Caco-2 (cell line): ENCODE measurements at regions of chr6 and their contacts with region 1.

Region 1: GRCh38 chr6:18122124-18123093 is at the start of gene NHLRC1:
- DNase-seq: peak; percentile 81 to 90
- H3K4me3 ChIP-seq: peak within 1 kb of the TSS; percentile 70
- H3K4me3 Mint-ChIP-seq: peak within 1 kb of the TSS; percentile 76
- H3K27ac Mint-ChIP-seq: peak within 1 kb of the TSS; percentile 52
- H3K4me1 ChIP-seq: peaks cover 7% of the 10 kb centered on the region; the same call in 1 of the 2 replicates
- H3K4me1 Mint-ChIP-seq: peaks cover 7% of the 10 kb centered on the region
- H3K27me3 ChIP-seq: no peaks in the 10 kb centered on the region; the same call in 1 of the 2 replicates
- H3K27me3 Mint-ChIP-seq: peaks cover 3% of the 10 kb centered on the region
- CTCF ChIP-seq: peak; percentile 80 to 92
- total RNA-seq, gene NHLRC1: 1.6 and 2.1 TPM in 2 replicates

Region 2: GRCh38 chr6:17584241-17584803 is 538.1 kb before region 1 on chr6:
- CTCF ChIA-PET with region 1: interaction called, 3 read pairs
- POLR2A ChIA-PET with region 1: no interaction called
- intact Hi-C with region 1: loop called (anchors 10 kb)
- DNase-seq: peak in 1 of 2 experiments; percentile 54
- H3K4me3 ChIP-seq: no peak overlapping the region
- H3K4me3 Mint-ChIP-seq: no peak overlapping the region
- H3K27ac Mint-ChIP-seq: no peak overlapping the region
- H3K4me1 ChIP-seq: no peaks in the 10 kb centered on the region
- H3K4me1 Mint-ChIP-seq: peaks cover 12% of the 10 kb centered on the region
- H3K27me3 ChIP-seq: no peaks in the 10 kb centered on the region
- H3K27me3 Mint-ChIP-seq: no peaks in the 10 kb centered on the region
- CTCF ChIP-seq: peak; percentile 62 to 87

Region 3: DNA sequence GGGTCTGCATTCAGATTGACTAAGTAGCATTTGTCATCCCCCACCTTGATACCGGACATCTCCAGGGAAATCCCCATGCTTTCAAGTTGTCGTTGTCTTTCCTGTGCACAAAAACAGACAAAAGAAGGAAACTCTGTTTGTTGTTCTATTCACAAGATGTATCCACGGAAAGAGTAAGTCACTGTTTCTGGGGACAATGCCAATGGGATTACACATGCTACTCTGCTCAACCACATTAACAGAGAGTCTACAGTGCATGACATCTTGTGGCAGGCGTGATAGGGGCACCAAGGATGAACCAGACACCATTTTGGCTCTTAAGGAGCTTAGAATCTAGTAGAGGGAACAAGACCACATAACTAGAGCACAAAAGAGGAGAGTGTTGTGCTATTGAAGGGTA is 291.3 kb before region 1 on chr6:
- CTCF ChIA-PET with region 1: no interaction called
- POLR2A ChIA-PET with region 1: no interaction called
- intact Hi-C with region 1: loop called (anchors 5 kb)
- DNase-seq: no peak
- H3K4me3 ChIP-seq: no peak overlapping the region
- H3K4me3 Mint-ChIP-seq: no peak overlapping the region
- H3K27ac Mint-ChIP-seq: no peak overlapping the region
- H3K4me1 ChIP-seq: no peaks in the 10 kb centered on the region
- H3K4me1 Mint-ChIP-seq: no peaks in the 10 kb centered on the region
- H3K27me3 ChIP-seq: no peaks in the 10 kb centered on the region
- H3K27me3 Mint-ChIP-seq: no peaks in the 10 kb centered on the region
- CTCF ChIP-seq: no peak

Region 4: DNA sequence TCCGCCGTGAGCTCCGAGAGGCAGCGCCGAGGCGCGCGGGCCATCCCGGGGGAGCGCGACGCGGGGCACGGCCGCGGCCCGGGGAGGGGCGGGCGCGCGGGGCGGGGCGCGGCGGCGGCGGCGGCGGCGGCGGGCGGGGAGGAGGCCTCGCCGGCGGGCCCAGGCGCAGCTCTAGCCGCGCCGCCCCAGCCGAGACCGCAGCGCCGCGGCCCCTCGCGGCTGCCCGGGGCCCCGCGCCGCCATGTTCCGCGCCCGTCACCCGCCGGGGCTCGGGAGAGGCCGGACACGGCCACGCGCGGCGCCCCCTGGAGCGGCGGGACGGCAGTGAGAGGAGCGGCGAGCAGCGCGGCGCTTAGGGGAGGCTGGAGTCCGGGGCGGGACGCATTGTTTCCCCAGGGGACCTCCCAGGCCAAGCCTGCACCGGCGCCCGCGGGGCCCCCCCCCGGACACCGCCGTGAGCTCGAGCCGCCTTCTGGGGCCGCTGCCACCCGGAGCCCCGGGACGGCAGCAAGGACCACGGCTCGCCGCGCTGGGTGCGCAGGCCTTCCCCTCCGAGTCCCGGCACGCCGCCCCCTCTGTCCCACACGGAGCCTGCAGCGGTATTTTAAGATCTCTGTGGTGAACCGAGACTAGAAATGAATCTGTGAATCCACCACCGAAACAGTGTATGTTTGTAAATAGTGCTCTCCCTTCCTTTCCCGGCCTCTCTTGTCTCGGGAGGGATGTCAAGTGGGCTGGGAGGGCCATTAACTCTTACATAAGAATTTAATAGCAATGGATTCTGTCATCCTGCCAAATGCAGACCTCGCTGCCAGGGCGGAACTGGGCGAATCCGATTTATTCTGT is 134.6 kb before region 1 on chr6 and contains the start of gene KIF13A:
- CTCF ChIA-PET with region 1: no interaction called
- POLR2A ChIA-PET with region 1: no interaction called
- intact Hi-C with region 1: loop called (anchors 1 kb)
- DNase-seq: peak; percentile 45 to 74
- H3K4me3 ChIP-seq: peak within 1 kb of the TSS; percentile 60
- H3K4me3 Mint-ChIP-seq: peak within 1 kb of the TSS; percentile 86
- H3K27ac Mint-ChIP-seq: peak within 1 kb of the TSS; percentile 74
- H3K4me1 ChIP-seq: 0 out of 2 replicates have a peak, but pooled peaks cover 5% of the 10 kb centered on the region
- H3K4me1 Mint-ChIP-seq: no peaks in the 10 kb centered on the region
- H3K27me3 ChIP-seq: no peaks in the 10 kb centered on the region
- H3K27me3 Mint-ChIP-seq: no peaks in the 10 kb centered on the region
- CTCF ChIP-seq: peak in 1 of 2 experiments; percentile 9
- total RNA-seq, gene KIF13A: 13.8 and 14.0 TPM in 2 replicates

Region 5: DNA sequence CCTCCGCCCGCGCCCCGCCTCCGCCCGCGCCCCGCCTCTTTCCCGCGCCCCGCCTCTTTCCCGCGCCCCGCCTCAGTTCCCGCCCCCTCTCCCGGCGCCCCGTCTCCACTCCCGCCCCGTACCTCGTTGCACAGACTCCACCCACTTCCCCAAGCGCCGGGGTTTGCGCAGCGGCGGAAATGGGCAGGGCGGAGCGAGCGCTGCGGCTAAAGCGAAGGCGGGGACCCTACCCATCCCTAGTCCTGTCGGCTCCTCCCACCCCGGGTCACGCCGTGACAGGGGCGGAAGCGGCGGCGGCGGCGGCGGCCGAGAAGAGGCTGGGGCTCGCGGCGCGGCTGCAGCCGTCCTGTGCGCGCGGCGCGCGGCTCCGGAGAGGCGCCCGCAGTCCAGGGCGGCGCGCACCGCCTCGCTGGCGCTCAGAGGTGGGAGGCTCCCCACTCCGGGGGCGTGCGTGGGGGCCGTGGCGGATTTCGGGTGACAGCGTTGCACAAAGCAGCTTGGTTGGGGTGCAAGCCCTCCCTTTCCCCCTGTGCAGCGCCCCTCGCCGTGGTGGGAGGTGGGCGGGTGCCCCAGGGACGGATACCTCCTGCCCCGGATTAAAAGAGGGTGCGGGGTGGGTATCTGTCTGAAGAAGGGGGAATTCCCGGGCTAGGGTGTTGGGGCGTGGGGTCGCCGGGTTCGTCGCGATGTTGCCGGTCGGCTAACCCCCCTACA is 32.9 kb after region 1 on chr6 and contains the start of gene KDM1B:
- CTCF ChIA-PET with region 1: no interaction called
- POLR2A ChIA-PET with region 1: no interaction called
- intact Hi-C with region 1: loop called (anchors 1 kb)
- DNase-seq: peak; percentile 98
- H3K4me3 ChIP-seq: peak within 1 kb of the TSS; percentile 98
- H3K4me3 Mint-ChIP-seq: peak within 1 kb of the TSS; percentile 99
- H3K27ac Mint-ChIP-seq: peak within 1 kb of the TSS; percentile 99
- H3K4me1 ChIP-seq: no peaks in the 10 kb centered on the region
- H3K4me1 Mint-ChIP-seq: no peaks in the 10 kb centered on the region
- H3K27me3 ChIP-seq: no peaks in the 10 kb centered on the region
- H3K27me3 Mint-ChIP-seq: no peaks in the 10 kb centered on the region
- CTCF ChIP-seq: no peak
- total RNA-seq, gene KDM1B: 9.5 and 10.6 TPM in 2 replicates